Naive thymus-derived CD4-positive, alpha-beta T cell (primary cell): ENCODE measurements at regions of chr1 and their contacts with region 1.

Region 1: GRCh38 chr1:108559215-108560186 is at the start of gene EEIG2:
- DNase-seq: peak; percentile 84 to 94 (median 91)
- ATAC-seq: peak; percentile 94
- H3K4me3 ChIP-seq: peak within 1 kb of the TSS; percentile 65
- H3K4me3 Mint-ChIP-seq: peak within 1 kb of the TSS in 9 of 10 donors; percentile 93 to 99 (median 96)
- H3K27ac ChIP-seq: peak within 1 kb of the TSS; percentile 68
- H3K27ac Mint-ChIP-seq: peak within 1 kb of the TSS; percentile 84 to 96 (median 91)
- H3K4me1 ChIP-seq: peaks cover 21 to 31% of the 10 kb centered on the region in 2 donors
- H3K4me1 Mint-ChIP-seq: peaks cover 22 to 38% (median 33%) of the 10 kb centered on the region in 7 donors
- H3K27me3 ChIP-seq: no peaks in the 10 kb centered on the region
- H3K27me3 Mint-ChIP-seq: peaks cover 0 to 10% (median 0%) of the 10 kb centered on the region in 5 donors
- total RNA-seq, gene EEIG2: 7.8 to 15.9 (median 10.9) TPM

Region 2: DNA sequence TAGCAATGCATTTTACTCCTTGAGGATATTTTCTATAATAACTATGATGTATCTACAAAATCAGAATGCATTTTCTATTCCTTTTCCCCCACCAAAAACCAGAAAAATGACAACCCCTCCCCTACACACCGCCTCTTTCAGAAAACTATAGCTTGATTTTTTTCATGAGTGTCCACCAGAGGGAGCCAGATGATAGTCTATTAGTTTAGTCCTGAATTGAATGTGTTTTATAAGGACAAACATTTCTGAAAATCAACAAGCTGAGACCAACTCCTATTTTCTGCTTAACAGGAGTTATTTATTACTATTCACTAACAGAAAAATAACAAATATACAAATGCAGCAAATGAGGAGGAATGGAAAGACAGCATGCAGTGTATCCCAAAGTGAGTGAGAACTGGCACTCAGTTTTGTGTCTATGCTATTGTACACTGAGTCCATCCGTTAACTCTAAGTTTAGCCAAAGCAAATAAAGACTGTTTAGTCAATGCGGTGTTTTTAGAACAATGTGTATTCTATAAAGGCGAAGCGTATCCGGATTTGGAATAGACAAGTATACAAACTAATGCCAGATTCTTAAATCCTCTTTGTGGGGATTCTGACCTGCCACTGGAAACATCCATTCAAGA is 777.2 kb before region 1 on chr1:
- CTCF ChIA-PET with region 1: interaction called, 4 read pairs
- POLR2A ChIA-PET with region 1: no interaction called
- intact Hi-C with region 1: loop called (anchors 1 to 2 kb)
- DNase-seq: peak in 7 of 9 donors; percentile 41 to 76 (median 66)
- ATAC-seq: no peak
- H3K4me3 ChIP-seq: no peak overlapping the region
- H3K4me3 Mint-ChIP-seq: no peak overlapping the region
- H3K27ac ChIP-seq: no peak overlapping the region
- H3K27ac Mint-ChIP-seq: peak overlapping the region in 1 of 9 donors; percentile 1
- H3K4me1 ChIP-seq: peaks cover 18 to 24% of the 10 kb centered on the region in 2 donors
- H3K4me1 Mint-ChIP-seq: peaks cover 23 to 39% (median 25%) of the 10 kb centered on the region in 7 donors
- H3K27me3 ChIP-seq: no peaks in the 10 kb centered on the region
- H3K27me3 Mint-ChIP-seq: peaks cover 0 to 2% (median 0%) of the 10 kb centered on the region in 5 donors

Region 3: DNA sequence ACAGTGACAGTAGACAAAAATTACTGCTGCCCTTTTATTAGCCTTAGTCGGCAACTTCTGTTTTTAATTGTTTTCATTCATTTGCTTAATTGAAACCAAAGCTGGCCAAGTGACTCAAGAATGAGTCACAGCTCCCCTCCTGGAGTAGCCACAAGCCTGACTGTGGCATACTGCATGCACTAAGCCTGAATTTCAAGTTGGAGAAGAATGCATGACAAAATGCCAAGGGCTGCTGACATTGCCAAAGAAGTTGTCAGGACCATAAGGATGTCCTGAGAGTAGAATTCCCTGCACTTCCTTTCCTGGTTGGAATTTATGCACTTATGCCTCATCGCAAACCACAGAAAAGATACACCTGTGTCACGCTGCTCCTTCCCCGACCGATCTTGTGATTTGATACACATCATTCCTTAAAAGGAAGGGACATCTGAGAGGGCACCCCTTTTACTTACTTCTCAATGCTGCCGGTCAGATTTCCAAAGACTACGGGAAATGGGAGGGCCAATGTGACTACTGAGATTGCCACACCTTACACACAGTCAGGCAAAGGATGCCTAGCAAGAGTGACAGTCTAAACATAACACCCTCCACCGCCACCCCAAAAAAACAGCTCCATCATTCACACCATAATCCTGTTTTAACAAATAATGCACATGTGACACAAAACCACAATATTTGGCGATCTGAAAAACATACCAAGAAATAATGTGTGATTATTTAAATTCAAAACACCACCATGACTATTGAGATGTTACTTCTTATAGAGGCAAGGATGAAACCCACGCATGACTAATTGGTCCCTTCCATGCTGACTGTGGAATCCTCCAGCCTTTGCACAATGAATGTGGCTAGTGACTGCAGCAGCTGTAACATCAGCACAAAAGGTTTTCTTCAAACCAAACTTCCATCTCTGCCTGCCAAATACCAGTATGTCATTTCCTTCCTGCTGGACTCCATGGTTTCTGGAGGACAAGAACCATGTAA is 622.7 kb before region 1 on chr1:
- CTCF ChIA-PET with region 1: no interaction called
- POLR2A ChIA-PET with region 1: no interaction called
- intact Hi-C with region 1: no loop called
- DNase-seq: peak in 1 of 9 donors; percentile 43
- ATAC-seq: peak; percentile 82
- H3K4me3 ChIP-seq: no peak overlapping the region
- H3K4me3 Mint-ChIP-seq: peak overlapping the region in 2 of 10 donors; percentile 23 to 33
- H3K27ac ChIP-seq: no peak overlapping the region
- H3K27ac Mint-ChIP-seq: peak overlapping the region in 3 of 9 donors; percentile 7 to 28 (median 26)
- H3K4me1 ChIP-seq: peaks cover 0 to 14% of the 10 kb centered on the region in 2 donors
- H3K4me1 Mint-ChIP-seq: peaks cover 24 to 68% (median 38%) of the 10 kb centered on the region in 7 donors
- H3K27me3 ChIP-seq: no peaks in the 10 kb centered on the region
- H3K27me3 Mint-ChIP-seq: no peaks in the 10 kb centered on the region

Region 4: DNA sequence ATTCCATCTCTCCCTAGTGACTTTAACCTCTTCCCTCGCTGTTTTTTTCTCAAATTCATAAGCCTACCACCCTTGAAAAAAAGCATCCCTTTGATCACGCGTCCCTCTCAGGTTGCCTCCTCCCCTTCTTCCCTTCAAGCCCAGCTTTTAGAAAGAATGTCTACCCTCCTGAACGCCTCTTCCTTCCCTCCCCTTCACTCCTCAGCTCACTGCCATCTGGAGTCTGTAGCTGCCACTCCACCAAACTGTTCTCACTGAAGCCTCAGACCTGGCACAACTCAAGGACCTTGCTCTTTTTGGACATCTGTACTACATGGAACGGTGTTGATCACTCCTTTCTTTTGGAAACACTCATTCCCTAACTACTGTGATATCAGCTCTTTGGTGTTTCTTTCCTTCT is 440.0 kb before region 1 on chr1:
- CTCF ChIA-PET with region 1: no interaction called
- POLR2A ChIA-PET with region 1: no interaction called
- intact Hi-C with region 1: no loop called
- DNase-seq: no peak
- ATAC-seq: no peak
- H3K4me3 ChIP-seq: no peak overlapping the region
- H3K4me3 Mint-ChIP-seq: no peak overlapping the region
- H3K27ac ChIP-seq: no peak overlapping the region
- H3K27ac Mint-ChIP-seq: peak overlapping the region in 1 of 9 donors; percentile 31
- H3K4me1 ChIP-seq: no peaks in the 10 kb centered on the region
- H3K4me1 Mint-ChIP-seq: peaks cover 4 to 23% (median 12%) of the 10 kb centered on the region in 7 donors
- H3K27me3 ChIP-seq: no peaks in the 10 kb centered on the region
- H3K27me3 Mint-ChIP-seq: peaks cover 0 to 8% (median 0%) of the 10 kb centered on the region in 5 donors

Region 5: GRCh38 chr1:108199781-108200570 is 359.5 kb before region 1 on chr1 and contains the start of gene SLC25A24:
- CTCF ChIA-PET with region 1: interaction called, 3 read pairs
- POLR2A ChIA-PET with region 1: interaction called, 10 read pairs
- intact Hi-C with region 1: loop called (anchors 1 to 2 kb)
- DNase-seq: peak; percentile 58 to 83 (median 71)
- ATAC-seq: peak; percentile 96
- H3K4me3 ChIP-seq: peak within 1 kb of the TSS; percentile 75
- H3K4me3 Mint-ChIP-seq: peak within 1 kb of the TSS; percentile 69 to 93 (median 88)
- H3K27ac ChIP-seq: peak within 1 kb of the TSS; percentile 65
- H3K27ac Mint-ChIP-seq: peak within 1 kb of the TSS; percentile 52 to 87 (median 82)
- H3K4me1 ChIP-seq: peaks cover 3 to 16% of the 10 kb centered on the region in 2 donors
- H3K4me1 Mint-ChIP-seq: peaks cover 18 to 42% (median 30%) of the 10 kb centered on the region in 7 donors
- H3K27me3 ChIP-seq: no peaks in the 10 kb centered on the region
- H3K27me3 Mint-ChIP-seq: peaks cover 0 to 18% (median 0%) of the 10 kb centered on the region in 5 donors
- total RNA-seq, gene SLC25A24: 7.1 to 27.2 (median 10.2) TPM

Region 6: DNA sequence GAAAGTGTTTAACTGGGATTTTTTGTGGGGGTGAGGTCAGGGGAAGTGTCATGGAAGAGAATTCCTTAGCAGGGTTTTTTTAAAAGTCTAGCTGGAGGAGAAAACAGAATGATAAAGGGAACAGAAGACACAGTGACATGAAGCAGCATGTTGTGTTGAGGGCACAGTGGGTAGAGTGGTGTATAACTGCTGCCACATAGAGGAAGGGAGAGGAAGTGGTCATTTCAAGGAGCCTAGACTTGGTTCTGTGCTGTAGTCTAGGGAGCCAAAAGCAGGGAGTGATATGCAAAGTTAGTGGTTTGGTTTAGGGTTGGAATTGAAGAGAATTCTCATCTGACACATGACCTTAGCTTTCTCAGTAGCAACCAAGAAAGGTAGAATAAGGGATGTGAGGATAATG is 10.6 kb after region 1 on chr1:
- CTCF ChIA-PET with region 1: interaction called, 14 read pairs
- POLR2A ChIA-PET with region 1: interaction called, 4 read pairs
- intact Hi-C with region 1: no loop called
- DNase-seq: peak in 4 of 9 donors; percentile 13 to 37 (median 20)
- ATAC-seq: peak; percentile 96
- H3K4me3 ChIP-seq: no peak overlapping the region
- H3K4me3 Mint-ChIP-seq: no peak overlapping the region
- H3K27ac ChIP-seq: no peak overlapping the region
- H3K27ac Mint-ChIP-seq: no peak overlapping the region
- H3K4me1 ChIP-seq: peaks cover 0 to 6% of the 10 kb centered on the region in 2 donors
- H3K4me1 Mint-ChIP-seq: peaks cover 0 to 6% (median 4%) of the 10 kb centered on the region in 7 donors
- H3K27me3 ChIP-seq: no peaks in the 10 kb centered on the region
- H3K27me3 Mint-ChIP-seq: no peaks in the 10 kb centered on the region

Region 7: GRCh38 chr1:108661030-108661620 is 101.6 kb after region 1 on chr1 and contains the start of gene HENMT1:
- CTCF ChIA-PET with region 1: interaction called, 3 read pairs
- POLR2A ChIA-PET with region 1: interaction called, 19 read pairs
- intact Hi-C with region 1: loop called in 1 of 2 experiments (anchors 1 kb)
- DNase-seq: peak; percentile 69 to 91 (median 88)
- ATAC-seq: peak; percentile 92
- H3K4me3 ChIP-seq: peak within 1 kb of the TSS; percentile 75
- H3K4me3 Mint-ChIP-seq: peak within 1 kb of the TSS; percentile 78 to 89 (median 85)
- H3K27ac ChIP-seq: peak within 1 kb of the TSS; percentile 99
- H3K27ac Mint-ChIP-seq: peak within 1 kb of the TSS; percentile 93 to 98 (median 96)
- H3K4me1 ChIP-seq: peaks cover 7 to 9% of the 10 kb centered on the region in 2 donors
- H3K4me1 Mint-ChIP-seq: peaks cover 11 to 46% (median 37%) of the 10 kb centered on the region in 7 donors
- H3K27me3 ChIP-seq: no peaks in the 10 kb centered on the region
- H3K27me3 Mint-ChIP-seq: no peaks in the 10 kb centered on the region
- total RNA-seq, gene HENMT1: 5.8 to 17.3 (median 13.5) TPM

Region 8: GRCh38 chr1:108816049-108816893 is 256.8 kb after region 1 on chr1:
- CTCF ChIA-PET with region 1: no interaction called
- POLR2A ChIA-PET with region 1: no interaction called
- intact Hi-C with region 1: no loop called
- DNase-seq: no peak
- ATAC-seq: no peak
- H3K4me3 ChIP-seq: no peak overlapping the region
- H3K4me3 Mint-ChIP-seq: no peak overlapping the region
- H3K27ac ChIP-seq: no peak overlapping the region
- H3K27ac Mint-ChIP-seq: no peak overlapping the region
- H3K4me1 ChIP-seq: no peaks in the 10 kb centered on the region
- H3K4me1 Mint-ChIP-seq: no peaks in the 10 kb centered on the region
- H3K27me3 ChIP-seq: no peaks in the 10 kb centered on the region
- H3K27me3 Mint-ChIP-seq: peaks cover 0 to 36% (median 7%) of the 10 kb centered on the region in 5 donors

Region 9: DNA sequence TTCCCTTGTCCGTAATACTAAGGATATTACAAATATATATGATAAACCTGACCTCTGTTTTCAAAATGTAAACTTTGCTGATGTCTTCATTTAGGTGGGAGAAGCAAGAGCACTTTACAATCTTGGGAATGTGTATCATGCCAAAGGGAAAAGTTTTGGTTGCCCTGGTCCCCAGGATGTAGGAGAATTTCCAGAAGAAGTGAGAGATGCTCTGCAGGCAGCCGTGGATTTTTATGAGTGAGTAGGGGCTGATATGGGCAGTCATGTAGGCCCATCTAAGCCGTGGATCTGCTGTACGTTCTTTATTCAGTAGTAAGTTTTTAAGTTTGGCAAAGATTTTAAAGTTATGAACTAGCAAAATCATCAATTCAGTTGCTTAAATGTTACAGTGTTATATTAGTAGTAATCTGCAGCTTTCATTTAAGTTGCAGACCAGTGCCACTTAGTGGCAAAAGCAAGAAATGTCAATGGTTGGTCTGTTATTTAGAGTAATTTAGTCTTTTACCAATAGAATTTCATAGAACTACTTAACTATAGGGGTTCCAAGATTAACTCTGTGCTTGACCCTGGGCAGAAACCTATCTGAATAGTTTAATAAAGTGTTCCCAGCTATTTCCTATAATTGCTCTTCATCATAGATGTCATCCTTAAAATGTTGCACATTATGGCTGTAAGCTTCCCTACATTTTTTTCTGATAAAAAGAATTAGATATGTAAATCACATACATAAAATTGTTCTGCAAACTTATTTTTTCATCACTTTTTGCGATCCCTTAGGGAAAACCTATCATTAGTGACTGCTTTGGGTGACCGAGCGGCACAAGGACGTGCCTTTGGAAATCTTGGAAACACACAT is 338.6 kb after region 1 on chr1:
- CTCF ChIA-PET with region 1: interaction called, 5 read pairs
- POLR2A ChIA-PET with region 1: no interaction called
- intact Hi-C with region 1: loop called in 1 of 2 experiments (anchors 1 kb)
- DNase-seq: peak in 7 of 9 donors; percentile 30 to 67 (median 54)
- ATAC-seq: peak; percentile 82
- H3K4me3 ChIP-seq: no peak overlapping the region
- H3K4me3 Mint-ChIP-seq: no peak overlapping the region
- H3K27ac ChIP-seq: no peak overlapping the region
- H3K27ac Mint-ChIP-seq: no peak overlapping the region
- H3K4me1 ChIP-seq: no peaks in the 10 kb centered on the region
- H3K4me1 Mint-ChIP-seq: peaks cover 0 to 4% (median 1%) of the 10 kb centered on the region in 7 donors
- H3K27me3 ChIP-seq: no peaks in the 10 kb centered on the region
- H3K27me3 Mint-ChIP-seq: peaks cover 0 to 4% (median 3%) of the 10 kb centered on the region in 5 donors

Region 10: DNA sequence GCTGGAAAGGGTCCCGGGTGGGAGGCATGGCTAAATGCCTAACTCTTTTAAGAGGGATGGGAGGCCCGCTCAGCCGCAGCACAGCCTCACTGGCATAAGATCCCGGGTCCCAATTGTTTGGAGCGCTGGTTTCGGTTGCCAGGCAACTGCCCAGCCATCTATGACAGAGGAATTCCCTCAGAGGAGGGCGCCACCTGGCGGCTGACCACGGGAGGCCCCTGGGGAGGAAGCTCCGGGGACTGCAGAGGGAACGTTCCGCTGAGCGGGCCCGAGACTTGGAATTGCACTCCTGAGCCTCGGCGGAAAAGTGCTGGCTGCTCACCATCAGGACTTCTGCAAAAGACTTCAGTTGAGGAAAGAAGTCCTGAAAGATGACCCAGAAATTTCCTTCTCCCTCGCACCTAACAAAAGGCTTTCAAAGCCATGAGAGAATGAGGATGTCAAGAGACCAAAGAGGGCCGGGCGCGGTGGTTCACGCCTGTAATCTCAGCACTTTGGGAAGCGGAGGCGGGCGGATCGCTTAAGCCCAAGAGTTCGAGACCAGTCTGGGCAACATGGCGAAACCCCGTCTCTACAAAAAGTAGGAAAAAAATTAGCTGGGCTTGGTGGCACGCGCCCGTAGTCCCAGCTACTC is 553.3 kb after region 1 on chr1:
- CTCF ChIA-PET with region 1: interaction called, 4 read pairs
- POLR2A ChIA-PET with region 1: no interaction called
- intact Hi-C with region 1: loop called in 1 of 2 experiments (anchors 5 kb)
- DNase-seq: peak; percentile 75 to 93 (median 85)
- ATAC-seq: peak; percentile 75
- H3K4me3 ChIP-seq: peak overlapping the region; percentile 68
- H3K4me3 Mint-ChIP-seq: peak overlapping the region; percentile 78 to 93 (median 88)
- H3K27ac ChIP-seq: peak overlapping the region; percentile 68
- H3K27ac Mint-ChIP-seq: peak overlapping the region; percentile 84 to 96 (median 92)
- H3K4me1 ChIP-seq: peaks cover 16 to 21% of the 10 kb centered on the region in 2 donors
- H3K4me1 Mint-ChIP-seq: peaks cover 23 to 40% (median 28%) of the 10 kb centered on the region in 7 donors
- H3K27me3 ChIP-seq: no peaks in the 10 kb centered on the region
- H3K27me3 Mint-ChIP-seq: peaks cover 0 to 41% (median 0%) of the 10 kb centered on the region in 5 donors